Transverse colon (tissue), 4 donors: ENCODE measurements at regions of chr3 and their contacts with region 1.

Region 1: GRCh38 chr3:66500576-66501482 is at the start of gene LRIG1:
- DNase-seq: peak; percentile 100
- H3K4me3 ChIP-seq: peak within 1 kb of the TSS; percentile 79 to 98 (median 92)
- H3K27ac ChIP-seq: peak within 1 kb of the TSS; percentile 94 to 99 (median 96)
- H3K4me1 ChIP-seq: peaks cover 8 to 71% (median 38%) of the 10 kb centered on the region in 4 donors
- H3K27me3 ChIP-seq: no peaks in the 10 kb centered on the region
- CTCF ChIP-seq: peak; percentile 33 to 56 (median 48)
- EP300 ChIP-seq: no peak
- POLR2A ChIP-seq: peak; percentile 56
- total RNA-seq, gene LRIG1: 67.2 to 87.6 (median 79.3) TPM

Region 2: GRCh38 chr3:66396161-66396760 is 104.6 kb before region 1 on chr3:
- in situ Hi-C with region 1: no loop called
- intact Hi-C with region 1: no loop called
- DNase-seq: no peak
- H3K4me3 ChIP-seq: no peak overlapping the region
- H3K27ac ChIP-seq: peak overlapping the region in 3 of 4 donors; percentile 9 to 68 (median 65)
- H3K4me1 ChIP-seq: peaks cover 6 to 17% (median 10%) of the 10 kb centered on the region in 4 donors
- H3K27me3 ChIP-seq: no peaks in the 10 kb centered on the region
- CTCF ChIP-seq: no peak
- EP300 ChIP-seq: no peak
- POLR2A ChIP-seq: no peak

Region 3: DNA sequence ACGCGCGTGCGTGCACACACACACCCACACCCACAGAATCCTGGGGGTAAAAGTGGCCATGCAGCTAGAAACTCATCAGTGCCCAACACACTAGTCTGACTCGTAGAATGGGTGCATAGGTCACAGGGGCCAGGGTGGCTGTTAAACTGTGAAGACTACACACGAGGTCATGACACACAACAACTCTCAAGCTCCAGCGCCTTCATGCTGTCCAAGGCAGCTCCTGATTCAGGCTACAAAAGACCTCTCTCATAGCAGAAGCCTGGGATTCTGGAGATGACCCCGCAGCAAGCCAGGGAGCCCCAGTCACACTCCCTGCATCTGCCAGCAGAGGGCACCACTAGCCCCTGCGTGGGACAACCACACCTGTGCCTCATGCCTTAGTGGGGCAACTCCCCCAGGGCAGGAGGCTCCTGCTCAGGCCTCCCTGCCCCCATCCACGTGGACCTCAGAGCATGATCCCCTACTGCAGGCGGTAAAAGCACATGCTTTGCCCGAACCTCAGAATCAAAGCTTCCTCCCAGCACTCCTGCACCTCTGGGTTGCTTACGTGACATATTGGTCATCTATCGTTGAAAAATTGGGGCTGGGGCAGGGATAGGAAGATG is 93.1 kb before region 1 on chr3:
- in situ Hi-C with region 1: no loop called
- intact Hi-C with region 1: loop called (anchors 5 kb)
- DNase-seq: peak; percentile 79
- H3K4me3 ChIP-seq: no peak overlapping the region
- H3K27ac ChIP-seq: peak overlapping the region; percentile 46 to 87 (median 70)
- H3K4me1 ChIP-seq: peaks cover 8 to 57% (median 39%) of the 10 kb centered on the region in 4 donors
- H3K27me3 ChIP-seq: no peaks in the 10 kb centered on the region
- CTCF ChIP-seq: peak; percentile 87 to 90 (median 89)
- EP300 ChIP-seq: no peak
- POLR2A ChIP-seq: no peak

Region 4: DNA sequence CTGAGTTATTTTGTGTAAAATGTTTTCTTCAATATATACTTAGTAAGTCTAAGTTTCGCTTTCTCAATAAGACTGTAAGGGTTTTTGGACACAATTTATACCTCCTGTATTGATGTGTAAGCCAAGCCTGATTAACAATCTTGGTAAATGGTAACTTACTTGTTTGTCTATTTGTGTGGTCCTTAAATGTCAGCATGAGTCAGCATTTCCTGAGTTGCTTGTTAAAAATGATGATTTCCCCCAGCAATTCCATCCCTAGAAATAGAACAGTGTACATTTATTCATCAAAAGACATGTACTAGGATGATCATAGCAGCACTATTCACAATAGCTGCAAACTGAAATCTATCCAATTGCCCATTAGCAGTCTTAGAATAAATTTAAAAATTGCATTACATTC is 53.3 kb after region 1 on chr3:
- in situ Hi-C with region 1: no loop called
- intact Hi-C with region 1: loop called (anchors 10 kb)
- DNase-seq: no peak
- H3K4me3 ChIP-seq: no peak overlapping the region
- H3K27ac ChIP-seq: no peak overlapping the region
- H3K4me1 ChIP-seq: no peaks in the 10 kb centered on the region
- H3K27me3 ChIP-seq: no peaks in the 10 kb centered on the region
- CTCF ChIP-seq: no peak
- EP300 ChIP-seq: no peak
- POLR2A ChIP-seq: no peak

Region 5: DNA sequence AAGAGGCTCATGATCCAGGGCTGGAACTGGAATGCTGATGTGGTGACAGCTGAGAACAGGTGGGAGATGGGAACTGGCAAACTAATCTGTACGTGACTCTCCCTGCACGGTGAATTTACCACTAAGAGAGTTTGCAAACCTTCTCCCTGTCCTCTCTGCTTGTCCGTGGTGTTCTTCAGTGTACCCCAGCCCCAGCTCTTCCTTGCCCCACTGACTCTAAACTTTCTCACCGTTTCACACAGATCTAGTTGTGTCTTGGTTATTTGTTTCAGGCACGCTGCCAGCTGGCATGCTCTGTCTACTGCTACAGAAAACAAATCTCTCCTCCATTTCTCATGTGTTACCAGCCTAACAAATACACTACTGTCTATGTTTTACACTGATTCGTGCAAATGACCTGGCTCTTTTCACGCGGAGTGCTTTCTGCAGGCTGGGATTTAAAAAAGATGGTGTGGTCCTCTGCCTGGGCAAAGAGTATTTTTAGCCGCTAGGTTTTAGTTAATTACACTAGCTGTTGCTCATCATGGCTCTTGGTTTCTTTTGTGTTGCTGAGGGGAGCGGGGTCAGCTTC is 192.7 kb after region 1 on chr3:
- in situ Hi-C with region 1: no loop called
- intact Hi-C with region 1: loop called (anchors 10 kb)
- DNase-seq: peak; percentile 44
- H3K4me3 ChIP-seq: no peak overlapping the region
- H3K27ac ChIP-seq: peak overlapping the region; percentile 46 to 78 (median 74)
- H3K4me1 ChIP-seq: peaks cover 12 to 33% (median 17%) of the 10 kb centered on the region in 4 donors
- H3K27me3 ChIP-seq: no peaks in the 10 kb centered on the region
- CTCF ChIP-seq: no peak
- EP300 ChIP-seq: no peak
- POLR2A ChIP-seq: no peak

Region 6: GRCh38 chr3:66822186-66823008 is 321.6 kb after region 1 on chr3:
- in situ Hi-C with region 1: loop called in 2 of 4 experiments (anchors 25 kb)
- intact Hi-C with region 1: no loop called
- DNase-seq: peak; percentile 76
- H3K4me3 ChIP-seq: no peak overlapping the region
- H3K27ac ChIP-seq: no peak overlapping the region
- H3K4me1 ChIP-seq: no peaks in the 10 kb centered on the region
- H3K27me3 ChIP-seq: no peaks in the 10 kb centered on the region
- CTCF ChIP-seq: peak; percentile 72 to 77 (median 74)
- EP300 ChIP-seq: no peak
- POLR2A ChIP-seq: no peak